Pancreas (tissue), 10 donors: ENCODE measurements at regions of chr6 and their contacts with region 1.

Region 1: GRCh38 chr6:157314705-157315321 is 8.5 kb downstream of the TMEM242 start:
- DNase-seq: no peak
- ATAC-seq: peak; percentile 70 to 95 (median 91)
- H3K4me3 ChIP-seq: no peak overlapping the region
- H3K27ac ChIP-seq: no peak overlapping the region
- H3K4me1 ChIP-seq: peaks cover 0 to 8% (median 0%) of the 10 kb centered on the region in 3 donors
- H3K27me3 ChIP-seq: no peaks in the 10 kb centered on the region
- CTCF ChIP-seq: peak; percentile 24 to 75 (median 64)

Region 2: GRCh38 chr6:157597446-157598312 is 282.9 kb after region 1 on chr6:
- intact Hi-C with region 1: loop called in 2 of 3 experiments (anchors 10 kb)
- DNase-seq: peak in 5 of 6 donors; percentile 40 to 66 (median 52)
- ATAC-seq: peak; percentile 89 to 93 (median 92)
- H3K4me3 ChIP-seq: no peak overlapping the region
- H3K27ac ChIP-seq: peak overlapping the region in 3 of 4 donors; percentile 20 to 68 (median 23)
- H3K4me1 ChIP-seq: peaks cover 9 to 13% (median 10%) of the 10 kb centered on the region in 3 donors
- H3K27me3 ChIP-seq: no peaks in the 10 kb centered on the region
- CTCF ChIP-seq: peak in 3 of 4 donors; percentile 27 to 42 (median 42)

Region 3: GRCh38 chr6:157659536-157660271 is 344.9 kb after region 1 on chr6:
- intact Hi-C with region 1: loop called in 1 of 3 experiments (anchors 5 kb)
- DNase-seq: peak in 1 of 6 donors; percentile 28
- ATAC-seq: no peak
- H3K4me3 ChIP-seq: no peak overlapping the region
- H3K27ac ChIP-seq: no peak overlapping the region
- H3K4me1 ChIP-seq: no peaks in the 10 kb centered on the region
- H3K27me3 ChIP-seq: no peaks in the 10 kb centered on the region
- CTCF ChIP-seq: no peak